Naive thymus-derived CD4-positive, alpha-beta T cell (primary cell): ENCODE measurements at regions of chr20 and their contacts with region 1.

Region 1: DNA sequence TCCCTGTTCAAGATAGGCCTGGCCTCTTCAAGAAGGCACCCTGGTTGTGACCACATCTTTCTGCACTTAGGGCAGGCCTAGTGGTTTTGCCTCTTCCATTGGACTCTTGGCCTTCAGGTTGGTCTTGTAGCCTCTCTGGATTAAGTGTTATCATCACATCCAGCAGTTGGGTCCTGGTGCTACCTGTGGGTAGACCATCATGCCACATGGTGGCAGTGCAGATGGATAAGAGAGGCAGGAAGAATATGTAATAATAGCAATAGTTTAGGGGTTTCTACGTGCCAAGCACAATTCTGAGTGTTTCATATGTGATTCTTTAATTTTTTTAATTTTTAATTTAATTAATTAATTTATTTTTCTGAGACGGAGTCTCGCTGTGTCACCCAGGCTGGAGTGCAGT is 28.5 kb upstream of the SNRPB2 start:
- DNase-seq: peak in 6 of 9 donors; percentile 15 to 36 (median 28)
- ATAC-seq: peak; percentile 54
- H3K4me3 ChIP-seq: no peak overlapping the region
- H3K4me3 Mint-ChIP-seq: no peak overlapping the region
- H3K27ac ChIP-seq: no peak overlapping the region
- H3K27ac Mint-ChIP-seq: no peak overlapping the region
- H3K4me1 ChIP-seq: no peaks in the 10 kb centered on the region
- H3K4me1 Mint-ChIP-seq: peaks cover 0 to 7% (median under 1%) of the 10 kb centered on the region in 7 donors
- H3K27me3 ChIP-seq: no peaks in the 10 kb centered on the region
- H3K27me3 Mint-ChIP-seq: peaks cover 0 to 18% (median 10%) of the 10 kb centered on the region in 5 donors

Region 2: GRCh38 chr20:16647875-16648597 is 53.3 kb before region 1 on chr20:
- CTCF ChIA-PET with region 1: no interaction called
- POLR2A ChIA-PET with region 1: no interaction called
- intact Hi-C with region 1: no loop called
- DNase-seq: no peak
- ATAC-seq: no peak
- H3K4me3 ChIP-seq: no peak overlapping the region
- H3K4me3 Mint-ChIP-seq: no peak overlapping the region
- H3K27ac ChIP-seq: no peak overlapping the region
- H3K27ac Mint-ChIP-seq: no peak overlapping the region
- H3K4me1 ChIP-seq: no peaks in the 10 kb centered on the region
- H3K4me1 Mint-ChIP-seq: no peaks in the 10 kb centered on the region
- H3K27me3 ChIP-seq: no peaks in the 10 kb centered on the region
- H3K27me3 Mint-ChIP-seq: peaks cover 12 to 32% (median 19%) of the 10 kb centered on the region in 5 donors

Region 3: GRCh38 chr20:16761305-16761829 is 60.1 kb after region 1 on chr20:
- CTCF ChIA-PET with region 1: no interaction called
- POLR2A ChIA-PET with region 1: no interaction called
- intact Hi-C with region 1: loop called (anchors 1 kb)
- DNase-seq: peak; percentile 7 to 58 (median 53)
- ATAC-seq: peak; percentile 71
- H3K4me3 ChIP-seq: no peak overlapping the region
- H3K4me3 Mint-ChIP-seq: no peak overlapping the region
- H3K27ac ChIP-seq: no peak overlapping the region
- H3K27ac Mint-ChIP-seq: no peak overlapping the region
- H3K4me1 ChIP-seq: no peaks in the 10 kb centered on the region
- H3K4me1 Mint-ChIP-seq: peaks cover 0 to 4% (median 0%) of the 10 kb centered on the region in 7 donors
- H3K27me3 ChIP-seq: no peaks in the 10 kb centered on the region
- H3K27me3 Mint-ChIP-seq: peaks cover 13 to 28% (median 25%) of the 10 kb centered on the region in 5 donors

Region 4: GRCh38 chr20:16821211-16822089 is 120.2 kb after region 1 on chr20:
- CTCF ChIA-PET with region 1: no interaction called
- POLR2A ChIA-PET with region 1: no interaction called
- intact Hi-C with region 1: loop called in 1 of 2 experiments (anchors 1 kb)
- DNase-seq: peak in 5 of 9 donors; percentile 8 to 27 (median 17)
- ATAC-seq: peak; percentile 68
- H3K4me3 ChIP-seq: no peak overlapping the region
- H3K4me3 Mint-ChIP-seq: no peak overlapping the region
- H3K27ac ChIP-seq: no peak overlapping the region
- H3K27ac Mint-ChIP-seq: no peak overlapping the region
- H3K4me1 ChIP-seq: no peaks in the 10 kb centered on the region
- H3K4me1 Mint-ChIP-seq: no peaks in the 10 kb centered on the region
- H3K27me3 ChIP-seq: no peaks in the 10 kb centered on the region
- H3K27me3 Mint-ChIP-seq: peaks cover 16 to 48% (median 33%) of the 10 kb centered on the region in 5 donors